HEK293 (cell line): ENCODE measurements at regions of chr2 and their contacts with region 1.

Region 1: GRCh38 chr2:130797493-130798435 is 39.0 kb upstream of the ARHGEF4 start:
- H3K4me3 ChIP-seq: peak overlapping the region; percentile 78
- H3K27ac ChIP-seq: peak overlapping the region; percentile 66; the same call in 1 of the 2 replicates
- H3K4me1 ChIP-seq: no peaks in the 10 kb centered on the region
- CTCF ChIP-seq: peak; percentile 93

Region 2: DNA sequence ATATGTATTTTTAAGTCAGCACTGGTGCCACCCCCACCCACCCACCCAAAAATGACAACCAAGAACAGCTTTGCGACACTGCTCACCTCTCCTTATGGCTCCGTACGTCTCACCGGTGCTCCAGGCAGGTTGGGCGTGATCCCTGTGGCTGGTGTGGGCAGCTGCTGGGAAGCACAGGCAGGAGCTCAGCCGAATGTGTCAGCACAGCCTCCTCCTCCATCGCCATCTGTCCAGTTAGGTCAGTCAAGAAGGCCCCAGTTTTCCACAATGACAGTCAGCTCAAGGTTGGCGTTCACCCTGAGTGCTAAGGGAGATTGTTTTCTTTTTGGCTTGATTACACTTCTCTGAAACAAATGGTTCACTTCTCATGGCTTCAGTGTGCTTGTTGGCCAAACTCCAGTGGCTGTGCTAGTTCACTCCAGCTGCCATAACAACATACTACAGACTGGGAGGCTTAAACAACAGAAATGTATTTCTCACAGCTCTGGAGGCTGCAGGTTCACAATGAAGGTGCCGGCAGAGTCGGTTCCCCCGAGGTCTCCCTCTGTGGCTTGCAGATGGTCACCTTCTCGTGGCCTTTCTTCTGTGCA is 12.2 kb before region 1 on chr2:
- CTCF ChIA-PET with region 1: interaction called, 12 read pairs
- POLR2A ChIA-PET with region 1: no interaction called
- H3K4me3 ChIP-seq: no peak overlapping the region
- H3K27ac ChIP-seq: no peak overlapping the region
- H3K4me1 ChIP-seq: no peaks in the 10 kb centered on the region
- CTCF ChIP-seq: no peak

Region 3: DNA sequence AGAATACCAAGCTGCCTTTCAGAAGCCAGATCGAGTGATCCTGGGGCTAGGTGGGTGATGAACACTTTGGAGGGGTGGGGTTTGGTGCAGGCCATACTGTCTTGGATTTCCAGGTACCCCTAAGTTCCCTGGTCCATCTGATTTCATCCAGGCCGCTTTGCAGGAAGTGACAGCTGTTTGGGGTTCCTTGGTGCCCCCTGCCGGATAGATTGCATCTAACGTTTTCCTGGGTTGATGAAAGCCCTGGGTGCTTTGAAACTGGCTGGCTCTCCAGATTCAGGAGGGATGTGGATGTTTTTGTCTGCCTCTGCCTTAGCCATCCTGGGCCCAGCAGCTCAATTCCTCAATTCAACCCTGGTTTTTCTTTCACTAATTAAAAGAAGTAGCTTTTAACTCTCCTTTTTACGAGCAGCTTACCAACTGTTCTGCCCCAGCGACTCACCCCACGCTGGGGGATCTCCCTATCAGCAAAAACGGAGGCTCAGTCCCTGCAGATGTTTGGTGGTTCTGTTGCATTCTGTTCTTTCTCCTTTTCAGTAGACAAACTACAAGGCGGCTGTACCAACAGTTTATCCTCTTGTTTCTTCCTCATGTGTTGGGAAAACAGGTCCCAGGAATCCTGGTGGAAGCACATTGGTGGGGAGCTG is 76.1 kb after region 1 on chr2:
- CTCF ChIA-PET with region 1: interaction called, 74 read pairs
- POLR2A ChIA-PET with region 1: interaction called, 3 read pairs
- H3K4me3 ChIP-seq: no peak overlapping the region
- H3K27ac ChIP-seq: no peak overlapping the region
- H3K4me1 ChIP-seq: no peaks in the 10 kb centered on the region
- CTCF ChIP-seq: peak; percentile 39

Region 4: GRCh38 chr2:130920415-130921163 is 122.8 kb after region 1 on chr2:
- CTCF ChIA-PET with region 1: interaction called, 10 read pairs
- POLR2A ChIA-PET with region 1: no interaction called
- H3K4me3 ChIP-seq: no peak overlapping the region
- H3K27ac ChIP-seq: no peak overlapping the region
- H3K4me1 ChIP-seq: no peaks in the 10 kb centered on the region
- CTCF ChIP-seq: peak; percentile 53